Head of caudate nucleus (tissue), 42 donors: ENCODE measurements at regions of chr19 and their contacts with region 1.

Region 1: GRCh38 chr19:7970716-7971448 is 27.4 kb upstream of the TIMM44 start:
- DNase-seq: peak in 35 of 42 donors; percentile 11 to 77 (median 50)

Region 2: GRCh38 chr19:7783991-7784421 is 186.9 kb before region 1 on chr19:
- intact Hi-C with region 1: no loop called
- DNase-seq: peak in 2 of 42 donors; percentile 21 to 53

Region 3: GRCh38 chr19:8252922-8253589 is 282.2 kb after region 1 on chr19:
- intact Hi-C with region 1: loop called (anchors 10 kb)
- DNase-seq: peak; percentile 67 to 94 (median 87)